OCI-LY7 (cell line): ENCODE measurements at regions of chr15 and their contacts with region 1.

Region 1: GRCh38 chr15:49235446-49236124 is 65.5 kb downstream of the GALK2 start:
- DNase-seq: peak; percentile 74
- H3K4me3 ChIP-seq: no peak overlapping the region
- H3K27ac ChIP-seq: peak overlapping the region; percentile 27
- H3K4me1 ChIP-seq: peaks cover 5% of the 10 kb centered on the region
- CTCF ChIP-seq: peak; percentile 86

Region 2: DNA sequence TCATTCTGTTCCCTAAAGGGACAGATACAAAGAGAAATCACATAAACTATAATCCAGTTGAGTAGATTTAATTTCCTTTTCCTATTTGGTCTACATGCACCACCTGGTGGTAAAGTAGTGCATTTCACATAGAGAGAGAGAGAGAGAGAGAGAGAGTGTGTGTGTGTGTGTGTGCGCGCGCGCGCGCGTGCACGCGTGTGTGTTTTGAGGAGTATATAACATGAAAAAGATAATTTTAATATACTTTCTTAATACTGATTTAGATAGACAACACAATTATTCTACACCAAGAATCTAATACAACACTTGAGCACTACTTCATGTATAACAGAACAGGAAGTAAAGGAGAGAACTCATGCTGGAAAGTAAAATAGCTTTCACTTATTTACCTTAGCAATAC is 186.4 kb after region 1 on chr15:
- CTCF ChIA-PET with region 1: interaction called, 3 read pairs
- POLR2A ChIA-PET with region 1: no interaction called
- intact Hi-C with region 1: loop called (anchors 1 kb)
- DNase-seq: peak; percentile 69
- H3K4me3 ChIP-seq: no peak overlapping the region
- H3K27ac ChIP-seq: no peak overlapping the region
- H3K4me1 ChIP-seq: no peaks in the 10 kb centered on the region
- CTCF ChIP-seq: peak; percentile 98

Region 3: DNA sequence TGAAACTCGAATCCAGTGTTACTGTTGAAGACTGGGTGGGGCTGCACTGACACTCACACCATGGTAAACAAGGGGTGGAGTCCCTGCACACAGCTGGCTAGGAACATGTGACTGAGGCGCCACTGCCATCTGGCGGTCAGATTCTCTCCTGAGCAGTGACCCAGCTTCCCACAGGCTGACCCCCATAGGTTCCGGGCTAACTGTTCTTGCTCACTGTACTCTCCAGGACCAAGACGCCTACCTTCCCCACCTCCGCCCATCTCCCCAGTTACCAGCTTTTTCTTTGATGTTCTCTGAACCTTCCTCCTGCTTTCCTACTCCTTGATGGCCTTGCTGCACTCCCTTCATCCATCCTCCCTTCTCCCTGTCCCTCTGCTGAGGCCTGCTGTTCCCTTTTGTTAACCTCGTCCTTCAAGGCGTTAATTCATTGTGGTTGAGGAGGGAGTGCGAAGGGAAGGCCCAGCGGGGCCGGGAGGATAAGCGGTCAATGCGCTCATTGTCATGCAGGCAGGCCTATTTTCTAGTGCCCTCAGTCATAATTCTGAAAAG is 768.3 kb after region 1 on chr15:
- CTCF ChIA-PET with region 1: no interaction called
- POLR2A ChIA-PET with region 1: no interaction called
- intact Hi-C with region 1: loop called (anchors 5 kb)
- DNase-seq: peak; percentile 78
- H3K4me3 ChIP-seq: no peak overlapping the region
- H3K27ac ChIP-seq: no peak overlapping the region
- H3K4me1 ChIP-seq: no peaks in the 10 kb centered on the region
- CTCF ChIP-seq: peak; percentile 82